RWPE1 (cell line): ENCODE measurements at regions of chr20 and their contacts with region 1.

Region 1: DNA sequence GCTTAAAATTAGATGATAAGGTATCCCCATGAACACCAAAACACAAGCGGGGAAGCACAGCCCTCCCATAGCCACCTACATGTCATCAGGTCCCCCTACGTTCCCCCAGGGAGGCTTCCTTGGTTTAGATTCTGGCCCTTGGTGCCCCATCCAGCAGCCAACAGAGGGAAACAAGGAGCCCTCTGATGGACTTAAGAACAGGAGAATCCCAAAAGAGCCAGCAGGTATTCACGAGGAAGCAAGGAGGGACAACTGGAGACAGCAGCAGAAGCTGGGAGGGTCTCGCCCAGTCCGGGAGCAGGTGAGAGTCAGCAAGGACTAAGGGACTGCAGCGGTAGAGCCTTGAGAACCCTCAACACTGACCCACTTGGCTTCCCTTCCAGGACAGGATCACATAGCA is 58.4 kb upstream of the TOP1 start:
- DNase-seq: no peak
- H3K27ac ChIP-seq: no peak overlapping the region
- CTCF ChIP-seq: no peak

Region 2: DNA sequence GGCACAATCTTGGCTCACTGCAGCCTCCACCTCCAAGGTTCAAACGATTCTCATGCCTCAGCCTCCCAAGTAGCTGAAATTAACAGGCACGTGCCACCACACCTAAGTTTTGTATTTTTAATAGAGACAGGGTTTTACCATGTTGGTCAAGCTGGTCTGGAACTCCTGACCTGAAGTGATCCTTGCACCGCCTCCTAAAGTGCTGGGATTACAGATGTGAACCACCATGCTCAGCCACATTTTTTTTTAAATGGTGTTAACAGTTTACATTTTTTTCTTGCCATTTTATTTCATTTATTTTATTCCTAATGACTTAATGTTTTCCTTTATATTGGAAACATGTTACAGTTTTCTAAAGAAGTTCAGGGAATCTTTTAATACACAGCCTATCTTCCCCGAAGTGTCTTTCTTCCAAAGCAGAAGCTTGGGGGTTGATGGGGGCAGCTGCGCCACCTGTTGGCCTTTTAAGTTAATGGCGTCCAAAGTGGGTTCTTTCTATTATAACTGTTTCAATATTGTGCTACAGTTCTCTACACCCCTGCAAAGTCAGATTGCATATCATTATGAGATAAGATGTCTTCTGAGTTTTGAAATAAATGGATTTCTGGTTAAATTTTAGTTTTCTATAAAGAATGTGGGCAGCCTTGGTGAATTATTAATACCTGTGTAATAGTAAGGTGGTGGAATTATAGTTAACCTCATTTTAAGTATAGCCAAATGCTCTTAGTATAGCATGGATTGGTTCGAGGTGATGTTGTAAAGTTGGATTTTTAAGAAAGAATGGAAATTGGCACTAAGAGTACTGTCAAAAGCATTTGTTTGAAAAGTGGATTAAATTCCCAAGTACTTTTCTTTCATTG is 125.1 kb after region 1 on chr20:
- CTCF ChIA-PET with region 1: interaction called, 27 read pairs
- POLR2A ChIA-PET with region 1: no interaction called
- DNase-seq: peak; percentile 83
- H3K27ac ChIP-seq: no peak overlapping the region
- CTCF ChIP-seq: peak; percentile 99